Vagina (tissue), 2 donors: ENCODE measurements at regions of chr14 and their contacts with region 1.

Region 1: DNA sequence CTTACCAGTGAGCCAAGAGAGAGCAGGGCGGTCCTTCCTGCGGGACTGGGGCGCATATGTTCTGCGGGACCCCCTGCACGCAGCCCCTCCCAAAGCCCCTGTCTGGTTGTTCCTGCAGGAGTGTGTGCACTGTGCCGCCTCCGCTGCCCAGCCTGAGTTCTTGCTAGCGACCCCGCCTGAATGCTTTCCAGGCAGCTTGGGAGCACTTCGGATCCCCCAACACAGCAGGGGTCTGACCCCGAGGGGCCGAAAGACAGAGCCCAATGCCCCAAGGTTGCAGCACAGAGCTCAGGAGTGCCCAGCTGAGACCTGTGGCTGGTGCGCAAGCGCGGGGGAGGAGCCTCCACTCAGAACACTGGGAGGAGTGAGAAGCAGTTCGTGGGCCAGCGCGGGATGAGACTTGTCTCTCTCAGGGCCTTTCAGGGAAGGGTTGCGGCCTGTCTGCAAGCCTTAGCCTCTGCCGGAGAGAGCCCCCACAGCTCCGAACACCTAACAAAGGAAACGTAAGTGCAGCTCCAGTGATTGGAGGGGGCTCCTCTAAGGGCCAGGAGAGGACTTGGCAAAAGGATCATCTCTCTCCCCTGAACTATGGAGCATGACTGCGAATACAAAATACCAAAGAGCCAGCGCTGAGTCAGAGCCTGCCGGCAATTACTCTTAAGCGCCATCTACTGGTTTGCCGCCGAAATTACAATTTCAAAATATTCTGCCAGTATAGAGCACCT is 50.5 kb downstream of the GTF2A1 start:
- DNase-seq: peak in 1 of 2 donors; percentile 95
- H3K4me3 ChIP-seq: peak overlapping the region; percentile 64 to 72
- H3K27ac ChIP-seq: peak overlapping the region; percentile 87
- H3K4me1 ChIP-seq: peaks cover 11% of the 10 kb centered on the region
- H3K27me3 ChIP-seq: no peaks in the 10 kb centered on the region
- CTCF ChIP-seq: peak; percentile 59 to 83 (median 67)
- POLR2A ChIP-seq: peak in 1 of 2 donors; percentile 57

Region 2: DNA sequence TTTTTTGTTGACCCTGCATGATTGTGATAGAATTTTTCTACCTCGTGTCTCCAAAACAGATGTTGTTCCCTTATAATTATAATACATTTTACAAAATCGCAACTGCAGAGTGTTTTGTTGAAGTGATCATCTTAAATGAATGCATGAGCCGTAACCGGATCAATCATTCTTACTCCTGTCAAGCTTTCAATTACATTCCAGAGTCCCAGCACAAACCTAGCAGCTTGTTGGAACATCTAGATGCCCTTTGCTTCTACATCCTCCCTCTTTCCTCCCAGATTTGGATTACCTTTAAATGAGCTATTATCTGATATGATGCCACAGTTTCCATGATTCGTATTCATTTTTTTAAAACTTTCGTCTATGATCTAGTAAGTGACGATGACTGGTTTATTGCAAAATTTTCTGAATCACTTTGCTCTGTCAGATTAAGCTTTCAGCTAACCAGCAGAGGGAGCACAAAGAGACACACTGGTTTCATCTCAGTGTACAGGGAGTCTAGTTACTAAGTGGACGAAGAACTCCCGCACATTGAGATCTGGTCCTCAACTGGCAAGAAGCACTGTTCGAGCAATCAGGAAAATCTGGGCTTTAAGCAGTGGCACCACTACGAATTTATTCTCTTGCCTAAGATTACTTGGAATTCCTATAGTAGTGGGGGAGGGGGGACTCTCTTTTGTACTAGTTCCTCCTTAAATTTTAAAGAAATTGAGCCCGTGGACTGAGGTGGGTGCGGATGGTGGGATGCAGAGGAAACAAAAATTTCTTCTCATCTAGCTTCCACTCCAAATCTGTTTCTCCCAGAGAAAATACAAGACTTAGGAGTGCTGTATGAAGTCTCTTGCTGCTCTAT is 174.0 kb before region 1 on chr14:
- intact Hi-C with region 1: loop called (anchors 10 kb)
- DNase-seq: no peak
- H3K4me3 ChIP-seq: no peak overlapping the region
- H3K27ac ChIP-seq: no peak overlapping the region
- H3K4me1 ChIP-seq: no peaks in the 10 kb centered on the region
- H3K27me3 ChIP-seq: no peaks in the 10 kb centered on the region
- CTCF ChIP-seq: peak in 2 of 3 experiments; percentile 25 to 47
- POLR2A ChIP-seq: no peak